HepG2 (cell line): ENCODE measurements at regions of chr9 and their contacts with region 1.

Region 1: DNA sequence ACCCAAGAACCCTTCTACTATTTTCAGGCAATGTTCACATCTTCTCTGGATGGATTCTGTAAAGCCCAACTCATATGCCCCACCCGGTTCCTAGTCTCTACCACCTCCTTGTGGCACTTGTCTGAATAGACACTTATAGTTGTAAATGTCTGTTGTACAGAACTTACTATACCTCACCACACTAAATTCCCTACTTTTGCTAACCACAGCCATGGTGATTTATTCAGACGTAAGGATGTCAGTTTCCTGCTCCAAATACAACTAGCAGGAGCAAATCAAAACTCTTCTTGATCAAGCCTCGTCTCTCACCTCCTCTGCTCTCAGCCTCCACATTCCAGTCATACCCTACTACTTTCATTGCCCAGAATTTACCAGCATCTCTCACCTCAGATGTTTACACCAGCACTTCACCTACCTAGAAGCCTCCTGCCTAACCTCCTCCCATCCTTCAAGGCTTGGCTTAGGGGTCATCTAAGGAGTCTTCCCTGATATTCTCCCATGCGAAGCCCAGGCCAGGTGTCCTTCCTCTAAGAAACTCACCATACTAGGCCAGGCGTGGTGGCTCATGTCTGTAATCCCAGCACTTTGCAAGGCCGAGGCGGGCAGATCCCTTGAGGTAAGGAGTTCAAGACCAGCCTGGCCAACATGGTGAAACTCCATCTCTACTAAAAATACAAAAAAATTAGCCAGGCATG is 75.5 kb downstream of the MAPKAP1 start:
- DNase-seq: peak; percentile 62
- ATAC-seq: peak; percentile 84
- H3K4me3 ChIP-seq: no peak overlapping the region
- H3K27ac ChIP-seq: no peak overlapping the region
- H3K4me1 ChIP-seq: peaks cover 31% of the 10 kb centered on the region
- H3K27me3 ChIP-seq: no peaks in the 10 kb centered on the region
- CTCF ChIP-seq: peak; percentile 85
- EP300 ChIP-seq: no peak
- POLR2A ChIP-seq: no peak
- RAD21 ChIP-seq: peak; percentile 80

Region 2: GRCh38 chr9:125407974-125408900 is 223.3 kb before region 1 on chr9:
- CTCF ChIA-PET with region 1: interaction called, 5 read pairs
- POLR2A ChIA-PET with region 1: no interaction called
- in situ Hi-C with region 1: loop called (anchors 5 kb)
- intact Hi-C with region 1: no loop called
- DNase-seq: peak; percentile 39
- ATAC-seq: peak; percentile 84
- H3K4me3 ChIP-seq: peak overlapping the region; percentile 72 to 78 (median 78)
- H3K27ac ChIP-seq: no peak overlapping the region
- H3K4me1 ChIP-seq: peaks cover 52% of the 10 kb centered on the region
- H3K27me3 ChIP-seq: peaks cover 0 to 34% of the 10 kb centered on the region in 2 experiments; a peak in 4 of 5 replicates
- CTCF ChIP-seq: peak; percentile 96
- EP300 ChIP-seq: no peak
- POLR2A ChIP-seq: no peak
- RAD21 ChIP-seq: peak; percentile 95

Region 3: GRCh38 chr9:125428060-125428901 is 203.3 kb before region 1 on chr9:
- CTCF ChIA-PET with region 1: no interaction called
- POLR2A ChIA-PET with region 1: no interaction called
- in situ Hi-C with region 1: no loop called
- intact Hi-C with region 1: loop called (anchors 5 kb)
- DNase-seq: no peak
- ATAC-seq: peak; percentile 57
- H3K4me3 ChIP-seq: peak overlapping the region in 1 of 3 experiments; percentile 5; a peak in 1 of 6 replicates
- H3K27ac ChIP-seq: no peak overlapping the region
- H3K4me1 ChIP-seq: peaks cover 57% of the 10 kb centered on the region
- H3K27me3 ChIP-seq: peaks cover 0 to 8% of the 10 kb centered on the region in 2 experiments; a peak in 1 of 5 replicates
- CTCF ChIP-seq: peak; percentile 85
- EP300 ChIP-seq: no peak
- POLR2A ChIP-seq: no peak
- RAD21 ChIP-seq: peak; percentile 67; the same call in 1 of the 2 replicates

Region 4: GRCh38 chr9:125484350-125485282 is 146.9 kb before region 1 on chr9:
- CTCF ChIA-PET with region 1: no interaction called
- POLR2A ChIA-PET with region 1: no interaction called
- in situ Hi-C with region 1: no loop called
- intact Hi-C with region 1: loop called (anchors 5 kb)
- DNase-seq: no peak
- ATAC-seq: no peak
- H3K4me3 ChIP-seq: no peak overlapping the region
- H3K27ac ChIP-seq: peak overlapping the region; percentile 39
- H3K4me1 ChIP-seq: peaks cover 29% of the 10 kb centered on the region
- H3K27me3 ChIP-seq: no peaks in the 10 kb centered on the region
- CTCF ChIP-seq: no peak
- EP300 ChIP-seq: no peak
- POLR2A ChIP-seq: no peak
- RAD21 ChIP-seq: no peak

Region 5: DNA sequence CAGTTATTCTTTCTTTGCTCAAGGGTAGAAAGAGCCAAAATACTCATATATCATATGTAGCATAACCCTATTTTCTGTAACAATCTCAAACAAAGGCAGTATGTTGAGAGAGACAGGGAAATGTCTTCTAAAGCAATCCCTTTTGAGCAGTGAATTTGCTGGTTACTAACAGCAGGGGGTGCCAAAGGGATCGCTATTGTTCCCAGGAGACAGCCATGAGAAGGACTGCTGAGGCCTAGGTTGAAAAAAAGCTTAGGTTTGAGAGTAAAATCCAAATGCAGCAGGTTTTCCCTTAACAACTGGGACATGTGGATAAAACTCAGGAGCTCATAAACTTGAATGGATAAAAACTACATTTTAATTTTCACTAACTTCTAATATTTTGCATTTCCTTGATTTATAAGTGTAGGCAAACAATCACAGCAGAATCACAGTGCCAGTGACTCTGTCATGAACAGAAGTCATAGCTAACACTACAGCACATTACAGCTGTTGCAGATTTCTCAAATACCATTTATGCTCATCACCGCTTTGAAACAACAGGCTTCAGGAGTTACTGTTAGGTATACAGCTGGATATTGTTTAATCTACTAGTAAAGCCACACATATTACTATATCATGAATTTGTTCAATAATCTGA is 73.0 kb before region 1 on chr9:
- CTCF ChIA-PET with region 1: interaction called, 42 read pairs
- POLR2A ChIA-PET with region 1: no interaction called
- in situ Hi-C with region 1: no loop called
- intact Hi-C with region 1: loop called (anchors 1 kb)
- DNase-seq: peak; percentile 66
- ATAC-seq: peak; percentile 82
- H3K4me3 ChIP-seq: no peak overlapping the region
- H3K27ac ChIP-seq: no peak overlapping the region
- H3K4me1 ChIP-seq: peaks cover 6% of the 10 kb centered on the region; the same call in 1 of the 2 replicates
- H3K27me3 ChIP-seq: no peaks in the 10 kb centered on the region
- CTCF ChIP-seq: peak; percentile 84
- EP300 ChIP-seq: no peak
- POLR2A ChIP-seq: no peak
- RAD21 ChIP-seq: peak; percentile 76